Posterior vena cava (tissue), 2 donors: ENCODE measurements at regions of chr1 and their contacts with region 1.

Region 1: DNA sequence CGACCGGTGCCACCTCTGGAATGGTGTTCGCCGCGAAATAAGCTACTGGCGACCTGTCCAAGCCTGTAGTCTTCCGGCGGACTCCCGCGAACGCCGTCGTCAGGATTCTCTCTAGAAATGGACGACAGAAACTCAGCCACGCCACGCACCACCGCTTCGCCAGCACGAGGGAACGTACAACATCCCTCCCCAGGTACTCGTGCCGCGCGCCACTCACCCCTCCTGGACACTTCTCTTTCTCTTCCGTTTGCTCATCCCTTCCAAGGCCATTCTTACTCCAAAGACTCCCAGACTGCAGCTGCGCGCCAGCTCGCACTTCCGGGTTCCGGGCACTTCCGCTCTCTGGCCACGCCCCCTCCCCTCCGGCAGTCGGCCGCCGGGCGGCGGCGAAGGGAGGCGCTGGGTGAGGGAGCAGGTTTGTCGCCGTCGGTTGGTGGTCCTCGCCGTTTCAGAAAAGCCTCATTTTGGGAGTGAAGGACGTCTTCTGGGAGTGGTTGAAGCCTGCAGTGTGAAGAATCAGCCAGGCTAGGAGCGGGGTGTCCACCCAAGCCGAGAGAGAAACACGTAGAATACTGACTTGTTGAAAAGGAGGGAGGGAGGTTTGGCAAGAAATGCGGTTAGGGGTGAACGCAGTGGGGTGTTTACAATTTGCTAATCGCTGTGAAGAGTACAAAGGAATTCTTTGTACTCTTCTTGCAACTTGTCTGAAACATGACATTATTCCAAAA is at the start of gene RBM34:
- DNase-seq: peak; percentile 97
- total RNA-seq, gene RBM34: 57.7 to 61.1 TPM

Region 2: DNA sequence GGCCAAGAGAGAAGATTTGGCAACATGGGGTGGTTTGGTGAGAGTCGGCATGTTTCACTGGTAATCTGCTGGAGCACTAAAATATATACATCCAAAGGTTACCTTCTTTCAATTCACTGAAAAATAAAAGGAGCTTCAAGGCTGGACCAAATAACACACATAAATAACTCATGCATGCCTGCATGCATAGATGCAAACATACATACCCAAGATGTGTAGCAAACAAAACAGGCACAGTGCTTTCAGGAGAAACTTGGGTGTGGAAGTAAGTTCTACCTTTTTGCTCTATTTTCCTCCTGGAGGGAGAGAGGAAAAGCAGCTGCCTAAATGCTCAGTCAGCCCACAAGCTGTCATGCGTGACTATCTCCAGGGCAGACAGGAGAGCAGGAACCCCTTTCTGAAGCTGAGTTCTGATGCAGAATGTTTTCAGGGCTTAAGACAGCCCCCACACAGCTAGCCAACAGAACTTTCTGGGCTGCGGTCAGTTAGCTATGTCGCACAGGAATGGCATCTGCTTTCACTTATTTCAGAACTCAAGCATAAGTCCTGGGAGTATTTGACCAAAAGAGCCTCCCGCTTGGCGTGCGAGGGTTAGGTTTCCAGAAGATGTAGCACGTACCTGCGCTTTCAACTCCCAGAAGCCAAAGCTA is 198.7 kb before region 1 on chr1:
- intact Hi-C with region 1: no loop called
- DNase-seq: peak; percentile 89

Region 3: GRCh38 chr1:235136111-235136510 is 25.0 kb before region 1 on chr1:
- intact Hi-C with region 1: loop called in 1 of 2 experiments (anchors 1 kb)
- DNase-seq: no peak

Region 4: DNA sequence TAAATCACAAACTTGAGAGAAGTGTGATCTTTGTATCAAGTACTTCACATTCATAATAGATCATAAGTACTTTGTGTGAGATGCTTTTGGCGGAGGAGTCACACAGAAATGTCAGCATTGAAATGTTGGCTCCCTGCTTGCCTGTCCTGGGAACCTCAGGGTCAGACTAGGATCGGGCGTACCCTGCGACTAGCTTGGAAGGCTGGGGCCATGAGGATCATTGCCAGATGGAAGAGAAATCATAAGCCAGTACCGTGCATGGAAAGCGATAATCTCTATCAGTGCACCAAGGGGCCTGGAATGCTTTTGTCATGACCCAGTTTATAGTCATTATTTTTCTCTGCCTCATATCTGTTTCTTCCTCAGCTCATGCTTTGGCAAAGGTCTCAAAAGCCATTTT is 1669.4 kb after region 1 on chr1:
- intact Hi-C with region 1: loop called in 1 of 2 experiments (anchors 5 kb)
- DNase-seq: no peak